ENCODE measurements at regions of chr15 and their contacts with region 1.

Region 1: DNA sequence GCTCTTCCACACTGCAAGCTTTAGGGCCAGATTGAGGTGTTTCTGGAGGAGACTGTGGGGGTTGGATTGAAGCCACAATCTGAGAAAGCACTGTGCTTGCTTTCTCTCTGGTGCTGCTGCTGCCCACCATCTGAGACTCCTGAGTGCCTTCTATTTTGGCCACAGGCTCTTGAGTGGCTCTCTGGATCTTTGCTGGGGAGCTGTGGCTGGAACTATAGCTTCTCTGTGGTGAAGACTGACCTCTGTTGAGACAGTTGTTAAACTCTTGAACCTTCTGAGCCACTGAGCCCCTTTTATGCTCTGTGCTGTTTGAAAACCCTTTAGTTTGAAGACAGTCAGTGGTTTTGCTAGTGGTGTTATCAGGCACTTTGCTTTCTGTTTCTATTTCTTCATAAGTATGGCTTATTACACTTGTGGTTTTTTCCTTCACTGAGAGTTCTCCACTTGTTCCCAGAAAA is 108.7 kb upstream of the TSPAN3 start:
- DNase-seq: peak; percentile 40
- CTCF ChIP-seq: no peak

Region 2: DNA sequence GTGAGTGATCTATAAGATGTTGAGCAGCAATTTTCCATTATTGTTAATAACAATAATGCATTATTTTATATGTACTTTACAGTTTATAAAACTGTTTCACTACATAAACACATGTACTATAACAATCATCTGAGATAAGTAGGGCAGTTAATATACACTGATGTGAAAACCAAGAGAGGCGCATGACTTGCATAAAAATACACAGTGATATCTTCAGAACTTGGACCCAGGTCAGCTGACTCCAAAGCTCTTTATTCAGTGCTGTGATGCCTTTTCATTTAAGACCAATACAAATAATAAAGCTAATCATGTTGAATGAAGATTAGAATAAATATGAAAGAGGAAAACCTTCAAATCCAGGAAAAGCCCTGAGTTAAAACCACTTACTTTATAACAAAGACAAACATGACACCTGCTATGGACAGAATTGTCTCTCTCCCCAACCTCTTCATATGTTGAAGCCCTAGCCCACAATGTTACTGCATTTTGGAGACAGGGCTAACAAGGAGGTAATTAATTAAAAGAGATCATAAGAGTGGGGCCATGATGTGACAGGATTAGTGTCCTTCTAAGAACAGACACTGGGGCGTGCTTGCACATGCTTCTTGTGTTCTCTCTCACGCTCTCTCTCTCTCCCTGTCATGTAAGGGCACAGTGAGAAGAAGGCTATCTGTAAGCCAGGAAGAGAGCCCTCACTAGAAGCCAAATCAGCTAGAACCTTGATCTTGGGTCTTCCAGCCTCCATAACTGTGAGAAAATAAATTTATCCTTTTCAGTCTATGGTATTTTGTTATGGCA is 52.8 kb before region 1 on chr15:
- in situ Hi-C with region 1: loop called (anchors 10 kb)
- DNase-seq: no peak
- CTCF ChIP-seq: no peak